ENCODE measurements at regions of chr14 and their contacts with region 1.

Region 1: GRCh38 chr14:103346286-103346685 is 12.2 kb downstream of the EIF5 start:
- DNase-seq: no peak
- H3K4me3 ChIP-seq: no peak overlapping the region
- H3K27ac ChIP-seq: no peak overlapping the region
- H3K4me1 ChIP-seq: no peaks in the 10 kb centered on the region
- H3K27me3 ChIP-seq: no peaks in the 10 kb centered on the region
- CTCF ChIP-seq: no peak
- EP300 ChIP-seq: no peak
- RAD21 ChIP-seq: no peak

Region 2: DNA sequence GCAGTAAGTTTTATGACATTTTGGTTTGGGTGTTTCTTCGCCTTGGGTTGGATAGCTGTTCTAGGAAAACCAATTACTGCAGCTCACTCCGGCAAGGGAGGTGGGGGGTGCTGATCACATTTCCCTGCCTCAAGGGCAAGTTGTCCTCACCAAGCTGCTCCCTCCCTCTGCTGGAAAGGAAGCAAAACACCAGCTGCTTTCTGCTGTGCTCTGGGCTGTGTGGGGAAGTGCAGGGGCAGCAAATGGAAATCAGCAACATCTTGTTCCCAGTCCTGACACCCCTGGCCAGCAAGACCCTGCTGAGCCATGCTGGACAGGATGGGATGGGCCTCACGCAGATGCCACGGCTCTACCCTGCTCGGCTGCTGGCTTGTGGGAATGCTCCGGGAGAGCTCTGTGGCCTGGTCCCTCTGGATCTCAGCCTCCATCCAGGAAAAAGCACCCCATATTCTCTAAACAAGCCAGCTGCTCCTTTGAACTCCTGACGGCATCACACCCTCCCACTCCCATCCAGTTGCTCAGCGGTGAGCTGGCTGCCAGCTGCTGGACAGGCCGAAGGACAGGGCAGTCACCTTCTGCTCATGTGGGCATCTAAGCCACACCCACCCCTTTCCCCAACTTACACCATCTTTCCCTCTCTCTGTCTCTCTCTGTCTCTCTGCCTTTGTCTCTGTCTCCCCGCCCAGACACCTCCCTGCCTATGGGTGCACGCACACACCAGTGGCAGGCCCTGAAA is 64.6 kb before region 1 on chr14:
- CTCF ChIA-PET with region 1: no interaction called
- POLR2A ChIA-PET with region 1: no interaction called
- DNase-seq: peak; percentile 79
- H3K4me3 ChIP-seq: no peak overlapping the region
- H3K27ac ChIP-seq: no peak overlapping the region
- H3K4me1 ChIP-seq: no peaks in the 10 kb centered on the region; a peak in 1 of 4 replicates
- H3K27me3 ChIP-seq: peaks cover 13% of the 10 kb centered on the region; the same call in 1 of the 2 replicates
- CTCF ChIP-seq: peak; percentile 38
- EP300 ChIP-seq: no peak
- RAD21 ChIP-seq: peak; percentile 67

Region 3: DNA sequence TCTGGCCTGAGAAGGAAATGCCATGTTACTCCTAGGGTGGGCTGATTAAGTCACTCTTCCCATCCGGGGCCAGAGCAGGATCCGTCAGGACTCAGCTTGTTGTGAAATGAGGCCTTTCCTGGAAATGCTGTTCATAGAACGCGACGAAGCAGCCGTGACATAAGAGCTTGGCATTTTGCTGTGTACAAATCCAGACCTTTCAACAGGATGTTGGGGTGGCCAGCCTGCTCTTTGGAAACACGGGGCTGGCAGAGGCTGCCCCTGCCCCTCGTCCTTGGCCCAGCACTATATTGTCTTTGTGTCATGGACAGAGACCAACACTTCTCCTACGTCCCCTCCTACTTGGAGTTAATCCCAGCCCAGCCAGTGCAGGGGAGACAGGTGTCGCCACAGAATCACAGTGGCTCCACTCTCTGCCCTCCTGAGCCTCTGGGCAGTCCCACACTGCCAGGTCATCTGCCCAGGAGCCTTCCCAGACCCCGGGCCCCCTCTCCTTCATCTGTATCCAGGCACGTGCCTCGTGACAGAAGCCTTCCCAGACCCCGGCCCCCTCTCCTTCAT is 30.9 kb before region 1 on chr14:
- CTCF ChIA-PET with region 1: no interaction called
- POLR2A ChIA-PET with region 1: no interaction called
- DNase-seq: no peak
- H3K4me3 ChIP-seq: no peak overlapping the region
- H3K27ac ChIP-seq: no peak overlapping the region
- H3K4me1 ChIP-seq: no peaks in the 10 kb centered on the region
- H3K27me3 ChIP-seq: no peaks in the 10 kb centered on the region
- CTCF ChIP-seq: no peak
- EP300 ChIP-seq: no peak
- RAD21 ChIP-seq: no peak

Region 4: DNA sequence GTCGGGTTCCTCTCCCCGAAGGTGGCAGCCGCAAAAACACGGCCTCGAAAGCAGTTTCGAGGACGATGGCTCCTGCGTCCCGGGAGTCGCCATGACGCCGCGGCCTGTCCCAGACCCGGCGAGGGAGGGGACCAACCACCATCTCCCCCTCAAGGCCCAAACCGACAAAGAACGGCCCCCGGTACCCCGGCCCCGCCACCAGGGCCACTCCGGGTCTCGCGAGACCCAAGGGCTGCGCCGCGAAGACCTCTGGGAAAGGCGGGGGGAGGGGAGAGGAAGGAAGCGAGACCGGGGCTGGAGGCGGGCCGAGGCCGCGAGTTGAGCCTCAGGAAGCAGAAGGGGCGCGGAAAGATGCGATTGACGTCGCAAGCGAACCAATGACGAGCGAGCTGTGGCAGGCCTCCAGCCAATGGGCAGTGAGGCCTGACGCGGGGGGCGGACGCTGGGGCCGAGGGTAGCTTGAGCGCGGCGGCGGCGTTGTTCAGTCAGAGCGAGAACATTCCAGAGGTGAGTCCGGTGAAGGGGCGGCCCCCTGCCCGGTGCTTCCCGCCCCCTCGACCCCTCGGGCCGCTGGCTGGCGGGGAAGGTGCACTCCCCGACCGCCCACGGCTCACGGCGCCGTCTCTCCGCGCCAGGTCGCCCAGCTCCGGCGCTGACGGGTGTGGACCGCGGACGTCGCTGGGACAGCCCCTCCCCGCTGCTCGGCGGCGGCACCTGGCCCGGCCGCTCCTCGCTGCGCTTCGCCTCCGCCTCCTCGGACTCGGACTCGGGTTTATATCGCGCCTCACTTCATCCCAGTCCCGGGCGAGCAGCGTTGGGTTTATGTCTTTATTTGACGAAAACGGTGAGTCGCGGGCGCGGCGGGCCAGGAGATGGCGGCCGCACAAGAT is 12.3 kb before region 1 on chr14 and contains the start of gene EIF5:
- CTCF ChIA-PET with region 1: interaction called, 4 read pairs
- POLR2A ChIA-PET with region 1: interaction called, 21 read pairs
- DNase-seq: peak; percentile 99
- H3K4me3 ChIP-seq: peak within 1 kb of the TSS; percentile 83 to 94
- H3K27ac ChIP-seq: peak within 1 kb of the TSS; percentile 97 to 98
- H3K4me1 ChIP-seq: peaks cover 12 to 15% of the 10 kb centered on the region in 2 experiments
- H3K27me3 ChIP-seq: no peaks in the 10 kb centered on the region
- CTCF ChIP-seq: 0 out of 2 replicates have a peak, but pooled peaks have one; percentile 13
- EP300 ChIP-seq: peak in 1 of 2 experiments; percentile 48; a peak in 1 of 4 replicates
- RAD21 ChIP-seq: no peak
- polyA plus RNA-seq, gene EIF5: 120 and 127 TPM in 2 replicates

Region 5: DNA sequence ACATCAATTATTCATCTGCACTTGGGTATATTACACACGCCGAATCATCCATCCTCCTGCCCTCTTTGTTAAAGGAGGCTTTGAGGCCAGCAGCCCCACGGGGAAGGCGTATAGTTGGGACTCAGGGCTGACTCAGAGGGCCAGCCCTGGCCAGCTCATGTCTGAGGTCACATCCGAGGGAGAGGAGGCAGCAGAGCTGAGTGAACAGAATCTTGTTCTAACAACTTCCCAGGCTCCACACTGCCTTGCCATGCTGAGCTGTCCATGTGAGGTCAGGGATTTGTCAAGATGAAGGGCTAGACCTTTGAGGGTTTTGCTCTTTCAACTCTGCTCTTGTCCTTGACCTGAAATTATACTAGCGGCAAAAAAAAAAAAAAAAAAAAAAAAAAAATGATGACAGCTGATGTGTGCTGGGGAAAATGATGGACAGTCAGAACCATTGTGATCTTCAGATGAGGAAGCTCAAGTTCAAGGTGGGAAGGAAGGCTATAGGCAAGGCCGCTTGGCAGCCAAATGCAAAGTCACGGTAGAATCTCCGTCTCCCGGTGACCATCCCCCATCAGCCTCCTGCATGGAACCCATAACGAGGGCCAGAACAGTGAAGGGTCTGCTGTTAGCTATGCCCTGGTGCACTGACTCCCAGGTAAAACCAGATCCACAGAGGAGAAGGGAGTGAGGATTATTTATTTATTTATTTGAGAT is 26.5 kb after region 1 on chr14:
- CTCF ChIA-PET with region 1: no interaction called
- POLR2A ChIA-PET with region 1: no interaction called
- DNase-seq: no peak
- H3K4me3 ChIP-seq: no peak overlapping the region
- H3K27ac ChIP-seq: peak overlapping the region in 1 of 2 experiments; percentile 51; a peak in 2 of 4 replicates
- H3K4me1 ChIP-seq: peaks cover 0 to 6% of the 10 kb centered on the region in 2 experiments; a peak in 2 of 4 replicates
- H3K27me3 ChIP-seq: no peaks in the 10 kb centered on the region
- CTCF ChIP-seq: no peak
- EP300 ChIP-seq: peak in 1 of 2 experiments; percentile 61; a peak in 1 of 4 replicates
- RAD21 ChIP-seq: no peak

Region 6: GRCh38 chr14:103401223-103402214 is 55.2 kb after region 1 on chr14:
- CTCF ChIA-PET with region 1: no interaction called
- POLR2A ChIA-PET with region 1: no interaction called
- DNase-seq: no peak
- H3K4me3 ChIP-seq: no peak overlapping the region; a peak in 1 of 4 replicates
- H3K27ac ChIP-seq: peak overlapping the region; percentile 45 to 87
- H3K4me1 ChIP-seq: peaks cover 8 to 51% of the 10 kb centered on the region in 2 experiments
- H3K27me3 ChIP-seq: no peaks in the 10 kb centered on the region
- CTCF ChIP-seq: no peak
- EP300 ChIP-seq: no peak
- RAD21 ChIP-seq: no peak